A549 (cell line): ENCODE measurements at regions of chr9 and their contacts with region 1.

Region 1: DNA sequence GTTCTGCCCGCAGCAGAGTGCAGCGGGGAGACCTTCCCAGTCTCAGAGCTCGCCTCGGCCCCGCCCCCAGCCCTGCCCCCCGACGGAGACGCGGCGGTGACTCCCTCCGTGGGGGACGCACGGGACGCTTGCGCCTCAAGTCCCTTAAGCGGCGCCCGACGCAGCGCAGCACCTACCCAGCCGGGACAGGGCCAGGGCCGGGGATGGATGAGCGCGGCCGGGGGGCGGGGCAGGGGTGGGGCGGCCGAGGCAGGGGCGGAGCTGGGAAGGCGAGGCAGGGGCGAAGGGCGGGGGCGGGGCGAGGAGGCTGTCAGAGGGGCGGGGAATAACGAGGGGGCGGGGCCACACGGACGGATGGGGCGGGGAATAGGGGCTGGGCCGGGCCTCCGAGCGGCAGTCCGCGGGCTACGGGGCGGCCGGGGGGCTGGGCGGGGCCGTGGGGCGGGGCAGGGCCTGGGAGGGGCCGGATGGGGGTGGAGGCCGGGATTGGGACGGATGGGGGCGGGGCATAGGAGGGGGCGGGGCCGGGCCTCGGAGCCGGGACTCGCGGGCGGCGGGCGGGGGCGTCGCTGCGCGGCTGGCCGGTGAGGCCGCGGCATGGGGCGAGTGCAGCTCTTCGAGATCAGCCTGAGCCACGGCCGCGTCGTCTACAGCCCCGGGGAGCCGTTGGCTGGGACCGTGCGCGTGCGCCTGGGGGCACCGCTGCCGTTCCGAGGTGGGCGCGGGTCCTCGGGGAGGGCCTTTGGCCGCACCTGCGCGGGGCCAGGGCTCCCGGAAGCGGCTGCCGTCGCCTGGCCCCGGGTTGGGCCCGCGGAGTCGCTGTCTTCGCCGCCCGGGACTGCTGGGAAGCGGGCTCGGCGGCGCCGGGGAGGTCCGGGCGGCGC is at the start of gene ARRDC1:
- DNase-seq: peak; percentile 66 to 92
- ATAC-seq: peak; percentile 78 to 88
- H3K4me3 ChIP-seq: peak within 1 kb of the TSS; percentile 92
- H3K27ac ChIP-seq: peak within 1 kb of the TSS; percentile 93 to 95
- H3K4me1 ChIP-seq: peaks cover 17% of the 10 kb centered on the region
- CTCF ChIP-seq: no peak
- EP300 ChIP-seq: no peak
- POLR2A ChIP-seq: peak; percentile 78
- RAD21 ChIP-seq: no peak
- polyA plus RNA-seq, gene ARRDC1: 20.7 and 23.8 TPM in 2 replicates

Region 2: DNA sequence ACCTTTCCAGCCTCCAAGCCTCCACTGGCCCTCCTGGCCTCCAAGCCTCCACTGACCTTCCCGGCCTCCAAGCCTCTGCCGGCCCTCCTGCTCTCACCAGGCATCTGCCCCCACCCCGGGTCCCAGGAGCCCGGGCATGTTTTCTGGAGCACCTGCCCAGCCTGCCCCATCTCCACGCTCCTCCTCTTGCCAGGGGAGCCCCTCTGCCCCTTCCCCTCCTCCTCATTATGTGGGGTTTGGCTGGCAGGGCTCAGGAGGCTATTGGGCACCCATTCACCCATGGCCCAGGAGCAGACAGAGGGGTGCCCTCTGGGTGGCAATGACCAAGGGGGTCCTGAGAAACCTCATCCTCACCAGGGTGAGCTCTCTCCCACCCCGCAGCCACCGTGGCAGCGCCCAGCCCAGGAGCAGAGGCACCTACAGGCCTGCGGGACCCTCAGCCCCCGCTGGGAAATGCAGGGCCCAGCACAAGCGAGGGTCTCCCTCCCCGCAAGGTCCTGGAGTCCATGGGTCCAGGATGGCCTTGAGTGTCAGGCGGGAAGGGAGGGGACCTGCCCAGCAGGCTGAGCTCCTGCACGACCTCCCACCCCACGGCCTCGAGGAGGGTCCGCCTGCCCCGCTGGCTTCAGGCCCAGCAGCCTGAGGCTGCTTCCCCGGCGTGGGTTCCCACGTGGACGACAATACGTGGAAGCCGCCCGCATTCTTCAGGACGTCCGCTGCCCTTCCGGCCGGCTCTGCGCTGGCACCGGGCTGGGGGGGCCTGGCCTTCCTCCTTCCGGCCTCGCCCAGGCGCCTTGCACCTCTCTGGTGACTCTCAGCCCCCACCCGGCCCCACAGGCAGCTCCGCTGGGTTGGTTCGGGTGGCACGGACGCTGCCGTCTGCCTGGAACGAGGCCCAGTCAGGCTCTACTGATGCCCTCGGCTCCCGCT is 251.9 kb before region 1 on chr9:
- CTCF ChIA-PET with region 1: no interaction called
- POLR2A ChIA-PET with region 1: no interaction called
- DNase-seq: no peak
- ATAC-seq: no peak
- H3K4me3 ChIP-seq: no peak overlapping the region
- H3K27ac ChIP-seq: no peak overlapping the region
- H3K4me1 ChIP-seq: no peaks in the 10 kb centered on the region
- CTCF ChIP-seq: no peak
- EP300 ChIP-seq: no peak
- POLR2A ChIP-seq: no peak
- RAD21 ChIP-seq: no peak

Region 3: DNA sequence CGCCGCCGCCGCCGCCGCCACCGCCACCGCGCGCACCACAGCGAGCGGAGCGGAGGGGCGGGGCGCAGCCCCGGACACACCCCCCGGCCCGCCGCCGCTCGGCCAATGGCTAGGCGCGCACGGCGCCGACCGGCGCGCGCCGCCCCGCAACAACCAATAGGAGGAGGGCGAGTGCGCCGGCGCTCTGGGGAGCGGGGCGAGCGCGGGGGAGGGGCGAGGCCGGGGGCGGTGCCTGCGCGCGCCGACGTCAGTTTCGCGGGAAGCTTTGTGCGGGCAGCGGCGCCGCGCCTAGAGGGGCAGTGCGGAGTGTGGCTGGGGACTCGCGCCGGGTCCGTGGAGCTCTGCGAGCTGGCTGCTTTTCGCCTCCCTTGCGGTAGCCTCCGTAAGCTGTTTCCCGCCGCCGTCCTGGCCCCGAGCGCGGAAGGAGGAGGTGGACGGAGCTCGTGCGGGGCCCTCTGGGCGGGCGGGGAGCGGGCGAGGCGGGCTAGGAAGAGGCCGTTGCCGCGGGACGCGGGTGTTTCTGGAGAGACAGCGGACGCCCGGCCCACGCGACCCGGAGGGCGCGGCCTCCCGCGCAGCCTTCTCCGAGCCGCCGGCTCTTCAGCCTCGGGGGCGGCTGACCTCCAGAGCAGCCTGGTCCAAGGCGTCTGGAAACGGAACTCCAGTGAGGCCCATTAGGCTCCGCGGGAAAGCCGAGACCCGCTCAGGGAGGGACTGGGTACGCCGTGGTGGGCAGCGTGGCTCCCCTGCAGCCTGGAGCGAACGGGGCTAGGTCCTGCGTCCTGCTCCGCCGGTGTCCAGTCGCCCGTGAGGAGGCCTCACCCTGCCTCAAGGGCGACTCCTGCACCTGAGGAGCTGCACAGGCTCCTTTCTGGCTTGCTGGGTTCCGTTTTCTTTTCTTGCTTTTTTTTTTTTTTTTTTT is 14.6 kb before region 1 on chr9 and contains the start of gene ZMYND19:
- CTCF ChIA-PET with region 1: interaction called, 8 read pairs
- POLR2A ChIA-PET with region 1: interaction called, 11 read pairs
- DNase-seq: peak; percentile 85 to 94
- ATAC-seq: peak; percentile 87 to 93
- H3K4me3 ChIP-seq: peak within 1 kb of the TSS; percentile 99
- H3K27ac ChIP-seq: peak within 1 kb of the TSS; percentile 94 to 95
- H3K4me1 ChIP-seq: peaks cover 15% of the 10 kb centered on the region; the same call in 1 of the 3 replicates
- CTCF ChIP-seq: no peak
- EP300 ChIP-seq: no peak
- POLR2A ChIP-seq: peak; percentile 58
- RAD21 ChIP-seq: no peak
- polyA plus RNA-seq, gene ZMYND19: 16.0 and 19.6 TPM in 2 replicates

Region 4: DNA sequence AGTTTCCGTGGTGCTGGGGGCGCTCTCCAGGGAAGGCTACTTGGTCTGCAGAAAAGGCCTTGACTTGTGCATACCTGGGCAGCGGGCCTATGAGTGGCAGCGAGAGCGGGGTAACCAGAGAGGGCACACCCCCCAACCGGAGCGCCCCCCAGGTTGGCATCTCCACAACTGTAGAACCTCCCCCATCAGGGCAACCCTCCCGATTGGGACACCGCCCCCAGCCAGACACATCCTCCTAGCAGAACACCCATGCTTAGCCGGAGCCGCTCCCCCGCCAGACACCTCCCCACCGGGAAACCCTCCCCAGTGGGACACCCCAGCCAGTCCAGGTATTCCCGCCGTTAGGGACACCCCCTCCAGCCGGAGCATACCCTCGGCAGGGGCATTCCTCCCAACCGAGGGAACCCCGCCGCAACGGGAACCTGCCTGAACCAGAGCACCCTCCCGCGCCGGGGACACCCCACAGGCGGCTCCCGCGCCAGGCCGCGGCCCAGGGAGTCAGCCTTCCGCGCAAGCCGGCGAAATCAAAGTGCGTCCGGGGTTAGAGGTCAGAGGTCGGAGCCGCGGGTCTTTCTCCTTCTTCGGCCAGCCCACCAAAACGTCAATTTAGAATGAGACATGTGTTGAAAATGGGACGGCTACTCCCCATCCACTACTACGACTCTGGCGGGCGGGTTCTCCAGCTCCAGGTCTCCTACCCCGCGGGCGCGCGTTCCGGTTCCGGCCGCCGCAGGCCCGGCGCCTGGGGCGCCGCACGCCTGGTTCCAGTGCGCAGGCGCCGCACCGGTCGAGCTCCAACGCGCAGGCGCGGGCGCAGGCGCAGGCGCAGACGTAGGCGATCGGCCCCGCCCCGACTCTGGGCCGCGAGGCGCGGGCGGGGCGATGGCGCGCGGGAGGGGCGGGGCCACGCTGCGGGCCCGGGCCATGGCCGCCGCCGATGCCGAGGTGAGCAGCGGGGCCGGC is 13.0 kb after region 1 on chr9 and contains the start of gene EHMT1:
- CTCF ChIA-PET with region 1: no interaction called
- POLR2A ChIA-PET with region 1: interaction called, 10 read pairs
- DNase-seq: peak; percentile 84 to 86
- ATAC-seq: peak; percentile 65 to 76
- H3K4me3 ChIP-seq: peak within 1 kb of the TSS; percentile 71
- H3K27ac ChIP-seq: peak within 1 kb of the TSS; percentile 94 to 95
- H3K4me1 ChIP-seq: peaks cover 37% of the 10 kb centered on the region
- CTCF ChIP-seq: no peak; the same call in 2 of the 3 replicates
- EP300 ChIP-seq: no peak
- POLR2A ChIP-seq: peak; percentile 39; the same call in 1 of the 2 replicates
- RAD21 ChIP-seq: no peak
- polyA plus RNA-seq, gene EHMT1: 33.6 and 41.3 TPM in 2 replicates